Ascending aorta (tissue), 2 donors: ENCODE measurements at regions of chr17 and their contacts with region 1.

Region 1: DNA sequence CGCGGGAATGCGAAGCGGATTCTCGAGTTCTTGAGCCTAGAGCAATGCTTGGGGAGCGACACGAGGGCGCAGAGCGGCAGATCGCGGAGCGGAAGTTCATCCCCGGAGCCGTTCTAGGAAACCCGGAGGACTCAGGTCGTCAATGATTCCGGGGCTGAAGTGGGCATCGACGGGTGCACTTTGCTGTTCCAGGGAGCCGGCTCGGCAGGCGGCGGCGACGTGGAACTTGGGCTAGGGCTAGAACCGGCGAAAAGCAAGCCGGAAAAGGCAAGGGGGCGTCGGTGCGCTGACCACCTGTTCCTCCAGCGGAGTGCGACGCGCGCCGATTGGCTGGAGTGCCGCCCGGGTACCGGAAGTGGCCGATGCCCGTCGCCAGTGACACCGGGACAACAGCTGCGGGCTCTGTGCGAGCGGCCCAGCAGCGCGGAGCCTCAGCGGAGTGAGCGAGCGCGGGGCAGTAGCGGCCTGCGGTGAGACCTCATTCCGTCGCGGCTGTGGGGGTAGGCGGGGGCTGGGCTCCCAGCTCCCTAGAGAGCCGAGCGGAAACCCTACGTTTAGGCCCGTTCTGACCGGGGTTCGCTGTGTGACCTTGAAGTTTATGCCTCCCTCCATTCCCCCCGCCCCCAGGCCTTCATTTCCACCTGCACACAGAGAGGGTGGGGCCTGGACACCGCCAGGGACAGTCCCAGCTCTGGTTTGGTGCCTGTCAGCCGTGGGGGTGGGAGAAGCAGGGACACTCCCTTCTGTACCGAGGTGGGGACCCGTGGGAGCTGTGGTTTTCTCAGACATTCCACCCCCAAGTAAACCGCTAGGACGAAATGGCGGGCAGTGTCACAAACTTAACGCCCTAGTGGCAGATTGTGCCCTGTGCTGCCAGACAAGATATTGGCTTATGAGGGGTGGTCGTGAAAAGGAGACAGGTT is at the start of gene ZFP3:
- DNase-seq: peak; percentile 33 to 90
- H3K4me3 ChIP-seq: peak within 1 kb of the TSS; percentile 78 to 79
- H3K27ac ChIP-seq: peak within 1 kb of the TSS; percentile 70 to 78
- H3K4me1 ChIP-seq: peaks cover 6 to 10% of the 10 kb centered on the region in 2 donors
- H3K27me3 ChIP-seq: no peaks in the 10 kb centered on the region
- CTCF ChIP-seq: no peak
- total RNA-seq, gene ZFP3: 0.21 TPM

Region 2: GRCh38 chr17:5111402-5112204 is 33.2 kb after region 1 on chr17 and contains the start of gene ZNF232:
- intact Hi-C with region 1: loop called (anchors 2 kb)
- DNase-seq: peak; percentile 63 to 95
- H3K4me3 ChIP-seq: peak within 1 kb of the TSS; percentile 60 to 97
- H3K27ac ChIP-seq: peak within 1 kb of the TSS; percentile 53 to 55
- H3K4me1 ChIP-seq: peaks cover 0 to 15% of the 10 kb centered on the region in 2 donors
- H3K27me3 ChIP-seq: peaks cover 4% of the 10 kb centered on the region
- CTCF ChIP-seq: no peak
- total RNA-seq, gene ZNF232: 2.3 TPM